Tibial artery (tissue), 4 donors: ENCODE measurements at regions of chr22 and their contacts with region 1.

Region 1: DNA sequence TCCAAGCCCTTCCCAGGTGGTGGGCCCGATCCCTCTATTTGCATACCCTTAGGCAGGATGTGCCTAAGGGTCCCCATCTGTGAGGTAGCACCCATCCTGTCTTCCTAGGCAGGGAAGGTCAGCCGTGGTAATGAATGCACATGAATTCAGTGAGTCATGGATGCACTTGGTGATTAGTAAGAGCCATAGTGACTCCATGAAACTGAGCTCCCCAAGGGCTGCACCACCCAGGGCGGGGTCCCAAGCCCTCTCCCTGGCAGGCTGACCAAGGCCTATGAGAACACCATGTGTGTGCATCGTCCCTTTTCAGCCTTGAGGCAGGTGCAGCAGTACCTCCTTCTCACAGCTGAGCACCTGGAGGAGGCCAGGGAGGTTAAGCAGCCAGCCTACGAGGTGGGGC is 15.6 kb upstream of the SUSD2 start:
- DNase-seq: no peak
- H3K4me3 ChIP-seq: no peak overlapping the region
- H3K27ac ChIP-seq: peak overlapping the region; percentile 45 to 89
- H3K4me1 ChIP-seq: peaks cover 0 to 48% (median 28%) of the 10 kb centered on the region in 4 donors
- H3K27me3 ChIP-seq: no peaks in the 10 kb centered on the region
- CTCF ChIP-seq: no peak

Region 2: GRCh38 chr22:23970816-23971486 is 194.7 kb before region 1 on chr22:
- intact Hi-C with region 1: no loop called
- DNase-seq: no peak
- H3K4me3 ChIP-seq: no peak overlapping the region
- H3K27ac ChIP-seq: no peak overlapping the region
- H3K4me1 ChIP-seq: peaks cover 0 to 8% (median 0%) of the 10 kb centered on the region in 4 donors
- H3K27me3 ChIP-seq: no peaks in the 10 kb centered on the region
- CTCF ChIP-seq: no peak

Region 3: DNA sequence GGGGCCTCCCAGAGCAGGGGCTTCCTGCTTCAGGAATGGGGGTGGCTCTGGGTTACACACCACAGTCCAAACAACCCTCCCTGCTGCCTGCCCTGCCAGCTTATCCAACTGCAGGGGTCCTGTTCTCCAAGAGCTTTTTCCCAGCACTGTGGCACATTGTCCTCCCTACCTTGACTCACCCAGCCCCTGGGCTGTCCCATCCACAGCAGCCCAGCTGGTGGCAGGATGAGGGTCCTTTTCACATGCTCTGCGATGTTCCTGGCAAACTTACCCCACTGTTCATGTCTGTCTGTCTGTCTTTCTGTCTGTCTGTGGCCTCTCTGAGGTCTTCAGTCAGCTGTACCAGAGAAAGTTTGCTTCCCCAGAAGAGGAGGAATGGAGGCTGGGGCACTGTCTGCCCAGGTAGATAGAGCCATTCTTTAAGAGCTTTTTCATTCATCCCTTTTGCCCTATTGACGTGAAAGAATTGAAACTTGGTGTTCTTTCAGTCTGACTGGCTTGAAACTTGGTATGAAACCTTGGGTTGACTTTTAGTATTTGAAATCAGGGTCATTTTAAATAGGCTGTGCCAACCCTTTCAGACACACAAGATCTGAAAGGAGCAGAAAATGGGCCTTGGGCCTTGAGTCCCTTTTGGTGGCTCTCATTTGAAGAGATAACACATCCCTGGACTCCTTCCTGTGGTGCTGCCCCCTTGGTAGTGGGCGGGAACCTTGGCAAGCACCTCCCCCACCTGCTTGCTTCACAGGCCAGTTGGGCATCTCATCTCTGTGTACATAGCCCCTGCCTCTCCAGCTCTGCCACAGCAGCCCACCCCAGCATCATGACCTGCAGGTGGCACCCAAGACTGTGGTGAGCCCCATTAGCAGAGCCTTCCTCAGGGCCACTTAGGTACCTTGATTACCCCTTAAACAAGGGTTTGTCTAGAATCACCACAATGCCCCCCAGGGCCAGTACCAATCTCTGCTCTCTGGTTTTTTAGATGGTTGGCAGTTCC is 59.0 kb before region 1 on chr22:
- intact Hi-C with region 1: loop called (anchors 5 kb)
- DNase-seq: no peak
- H3K4me3 ChIP-seq: no peak overlapping the region
- H3K27ac ChIP-seq: peak overlapping the region; percentile 79 to 85
- H3K4me1 ChIP-seq: peaks cover 0 to 52% (median 35%) of the 10 kb centered on the region in 4 donors
- H3K27me3 ChIP-seq: no peaks in the 10 kb centered on the region
- CTCF ChIP-seq: peak; percentile 17 to 28

Region 4: DNA sequence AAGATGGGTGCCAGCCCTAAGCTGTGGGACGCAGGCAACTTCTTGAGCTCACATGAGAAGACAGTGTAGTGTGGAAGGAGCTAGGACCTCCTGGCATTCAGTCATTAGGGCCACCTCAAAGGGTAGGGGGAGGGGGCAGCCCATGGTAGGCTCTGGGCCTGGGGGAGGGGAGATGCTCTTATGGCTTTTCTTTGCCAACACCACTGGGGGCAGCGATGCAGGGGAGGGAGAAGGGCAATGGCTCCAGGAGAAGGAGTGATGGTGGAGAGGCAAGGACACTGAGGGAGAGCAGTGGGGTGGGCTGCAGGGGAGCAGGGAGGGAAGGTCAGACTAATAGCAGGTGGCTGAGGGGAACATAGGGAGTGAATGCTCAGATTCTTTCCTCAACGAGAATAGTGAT is 47.7 kb before region 1 on chr22:
- intact Hi-C with region 1: loop called (anchors 5 kb)
- DNase-seq: no peak
- H3K4me3 ChIP-seq: no peak overlapping the region
- H3K27ac ChIP-seq: no peak overlapping the region
- H3K4me1 ChIP-seq: peaks cover 0 to 29% (median 16%) of the 10 kb centered on the region in 4 donors
- H3K27me3 ChIP-seq: no peaks in the 10 kb centered on the region
- CTCF ChIP-seq: no peak